ENCODE measurements at regions of chr6 and their contacts with region 1.

Region 1: DNA sequence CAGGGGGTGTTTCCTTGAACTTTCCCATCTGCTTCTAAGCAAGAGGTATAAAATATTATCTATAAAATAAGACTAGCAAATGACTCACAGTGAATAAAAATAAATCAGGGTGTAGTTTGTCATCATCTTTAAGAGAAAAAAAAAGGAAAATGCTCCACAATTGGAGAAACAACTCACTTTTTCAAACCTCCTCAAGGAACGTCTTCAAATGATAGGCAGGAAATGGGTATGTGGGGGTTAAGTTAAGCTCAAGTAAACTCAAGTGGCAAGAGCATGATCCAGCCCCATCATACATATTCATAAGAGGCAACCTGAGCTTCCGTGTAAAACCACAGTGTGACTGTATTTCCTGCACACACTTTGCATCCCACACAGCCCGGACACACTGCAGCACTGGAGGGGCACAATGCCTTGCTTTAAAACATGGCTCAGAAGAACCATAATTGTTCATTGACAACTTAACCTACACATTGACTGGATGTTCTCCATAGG is 58.5 kb upstream of the CEP85L start:
- DNase-seq: peak; percentile 77
- H3K4me3 Mint-ChIP-seq: peak overlapping the region; percentile 96
- H3K27ac Mint-ChIP-seq: peak overlapping the region; percentile 99
- H3K4me1 Mint-ChIP-seq: peaks cover 94% of the 10 kb centered on the region
- H3K27me3 Mint-ChIP-seq: peaks cover under 1% of the 10 kb centered on the region

Region 2: DNA sequence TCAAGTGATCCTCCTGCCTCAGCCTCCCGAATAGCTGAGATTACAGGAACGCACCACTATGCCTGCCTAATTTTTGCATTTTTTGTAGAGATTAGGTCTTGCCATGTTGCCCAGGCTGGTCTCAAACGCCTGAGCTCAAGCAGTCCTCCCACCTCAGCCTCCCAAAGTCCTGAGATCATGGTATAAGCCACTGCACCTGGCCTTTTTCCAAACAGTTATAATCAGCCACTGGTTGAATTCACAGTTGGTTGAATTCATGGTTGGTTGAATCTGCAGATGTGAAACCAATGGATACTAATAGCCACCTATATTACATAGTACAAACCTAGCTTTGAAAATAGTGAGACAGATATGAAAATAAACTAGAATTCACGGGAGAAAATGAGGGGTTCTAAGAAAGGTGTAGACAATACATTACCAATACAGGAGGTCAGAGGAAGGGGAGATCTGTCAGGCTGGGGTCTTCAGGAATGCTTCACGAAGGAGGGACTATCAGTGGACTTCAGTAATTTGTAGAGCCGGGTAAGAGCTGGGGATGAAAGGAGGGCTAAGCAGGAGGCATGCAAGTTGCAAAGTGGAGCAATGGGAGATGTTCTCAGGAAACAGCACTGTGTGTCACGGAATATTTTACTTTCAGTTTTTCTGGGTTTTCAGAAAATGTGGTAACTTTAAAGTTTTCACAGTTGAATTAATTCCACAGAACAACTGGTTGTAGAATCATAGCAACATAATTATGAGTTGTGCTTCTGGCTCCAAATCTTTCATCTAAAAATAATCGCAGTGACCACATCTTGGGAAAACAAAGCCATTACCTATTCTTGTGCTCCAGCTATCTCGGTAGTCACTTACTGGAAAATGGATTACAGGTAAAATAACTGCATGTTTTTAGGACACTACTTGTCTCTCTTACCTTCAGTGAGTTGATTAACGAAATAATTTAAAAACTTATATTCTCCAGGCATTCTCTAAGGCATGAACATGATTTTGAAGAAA is 45.6 kb before region 1 on chr6:
- intact Hi-C with region 1: loop called (anchors 1 kb)
- DNase-seq: no peak
- H3K4me3 Mint-ChIP-seq: peak overlapping the region; percentile 86
- H3K27ac Mint-ChIP-seq: peak overlapping the region; percentile 89
- H3K4me1 Mint-ChIP-seq: peaks cover 61% of the 10 kb centered on the region
- H3K27me3 Mint-ChIP-seq: no peaks in the 10 kb centered on the region

Region 3: DNA sequence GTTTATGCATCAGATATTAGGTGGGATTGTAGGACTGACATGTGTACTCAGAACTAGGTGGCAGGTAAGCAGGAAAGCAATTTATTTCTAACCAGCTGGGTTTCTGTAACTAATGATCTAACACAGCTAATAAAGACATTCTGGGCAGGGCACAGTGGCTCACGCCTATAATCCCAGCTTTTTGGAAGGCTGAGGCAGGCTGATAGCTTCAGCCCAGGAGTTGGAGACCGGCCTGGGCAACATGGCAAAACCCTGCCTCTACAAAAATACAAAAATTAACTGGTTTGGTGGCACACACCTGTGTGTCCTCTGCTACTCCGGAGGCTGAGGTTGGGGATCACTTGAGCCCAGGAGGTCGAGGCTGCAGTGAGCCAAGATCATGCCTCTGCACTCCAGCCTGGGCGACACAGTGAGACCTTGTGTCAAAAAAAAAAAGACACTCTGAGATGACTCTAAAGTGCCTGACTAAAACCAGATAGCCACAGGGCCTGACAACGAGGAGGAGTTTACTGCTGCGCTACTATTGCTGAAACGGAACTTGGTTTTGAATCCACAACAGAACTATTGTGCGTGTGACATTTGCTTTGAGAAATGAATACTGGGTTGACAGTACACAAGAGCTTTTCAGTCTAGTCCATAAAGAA is 29.3 kb before region 1 on chr6:
- intact Hi-C with region 1: loop called (anchors 1 kb)
- DNase-seq: peak; percentile 20
- H3K4me3 Mint-ChIP-seq: peak overlapping the region; percentile 9
- H3K27ac Mint-ChIP-seq: peak overlapping the region; percentile 57
- H3K4me1 Mint-ChIP-seq: peaks cover 69% of the 10 kb centered on the region
- H3K27me3 Mint-ChIP-seq: no peaks in the 10 kb centered on the region

Region 4: GRCh38 chr6:118768904-118769325 is 59.0 kb after region 1 on chr6:
- intact Hi-C with region 1: loop called (anchors 1 kb)
- DNase-seq: peak; percentile 31
- H3K4me3 Mint-ChIP-seq: peak overlapping the region; percentile 1
- H3K27ac Mint-ChIP-seq: peak overlapping the region; percentile 80
- H3K4me1 Mint-ChIP-seq: peaks cover 29% of the 10 kb centered on the region
- H3K27me3 Mint-ChIP-seq: no peaks in the 10 kb centered on the region

Region 5: DNA sequence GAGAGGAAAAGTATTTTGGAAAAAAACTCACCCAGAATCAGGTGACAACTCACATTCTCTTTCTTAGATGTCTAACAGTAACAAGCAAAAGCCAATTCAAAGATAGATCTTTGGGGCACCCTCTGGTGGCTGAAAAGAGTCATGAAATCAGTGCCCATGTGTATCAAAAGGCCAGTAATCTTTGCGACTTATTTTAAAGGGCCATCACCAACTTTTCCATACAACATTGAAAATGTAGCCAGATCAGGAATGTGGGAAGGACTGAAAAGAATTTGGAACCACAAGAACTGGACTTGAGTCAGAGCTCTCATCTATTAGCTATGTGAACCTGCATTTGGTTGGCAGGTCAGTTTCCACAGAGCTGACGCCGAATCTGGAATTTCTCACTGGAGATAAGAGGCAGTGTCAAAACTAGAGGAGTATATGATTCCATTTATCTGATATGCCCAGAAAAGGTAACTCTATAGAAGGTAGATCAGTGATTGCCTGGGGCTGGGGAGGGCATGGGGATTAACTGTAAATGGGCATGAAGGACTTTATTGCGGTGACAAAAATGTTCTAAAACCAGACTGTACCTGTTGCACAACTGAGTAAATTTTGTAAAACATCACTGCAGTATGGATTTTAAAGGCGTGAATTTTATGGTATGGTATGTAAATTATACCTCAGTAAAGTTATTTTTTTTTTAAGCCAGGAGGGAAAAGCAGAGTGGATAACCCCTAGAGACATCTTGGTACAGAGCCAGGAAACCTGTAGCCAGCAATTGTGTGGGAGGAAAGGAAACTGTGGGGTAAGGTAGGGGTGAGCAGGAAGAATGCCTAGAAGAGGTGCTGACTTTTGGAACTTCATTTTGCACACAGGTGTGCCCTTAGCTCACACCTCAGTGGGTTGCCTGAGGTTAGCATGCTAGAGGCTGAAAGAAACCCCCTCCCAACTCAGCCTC is 67.0 kb after region 1 on chr6:
- intact Hi-C with region 1: loop called (anchors 1 kb)
- DNase-seq: peak; percentile 55
- H3K4me3 Mint-ChIP-seq: no peak overlapping the region
- H3K27ac Mint-ChIP-seq: no peak overlapping the region
- H3K4me1 Mint-ChIP-seq: peaks cover 14% of the 10 kb centered on the region
- H3K27me3 Mint-ChIP-seq: peaks cover 8% of the 10 kb centered on the region

Measured in activated T-helper 1 cell treated with anti-CD3 and anti-CD28 coated beads, Interleukin-12 subunit alpha, Interleukin-12 subunit beta, Interleukin-2, Interleukin-4 antibody, amounts not matched to agents 30 ng/mL and 10 ng/mL and 1 ng/mL, durations not matched to agents 14 hours and 24 hours and 36 hours (primary cell).